GM13976 (cell line): ENCODE measurements at regions of chr1 and their contacts with region 1.

Region 1: GRCh38 chr1:75233302-75233929 is 99.2 kb downstream of the LHX8 start:
- DNase-seq: peak; percentile 4
- CTCF ChIP-seq: peak; percentile 51

Region 2: GRCh38 chr1:75632350-75632949 is 399.0 kb after region 1 on chr1:
- in situ Hi-C with region 1: loop called (anchors 25 kb)
- DNase-seq: peak; percentile 17
- CTCF ChIP-seq: peak; percentile 29

Region 3: GRCh38 chr1:76083189-76083588 is 849.8 kb after region 1 on chr1:
- in situ Hi-C with region 1: no loop called
- DNase-seq: peak; percentile 18
- CTCF ChIP-seq: no peak